ENCODE measurements at regions of chr17 and their contacts with region 1.

Region 1: GRCh38 chr17:82153745-82154375 is 55.8 kb upstream of the FASN start:
- DNase-seq: peak; percentile 73 to 85 (median 78)
- H3K4me3 ChIP-seq: no peak overlapping the region
- H3K27ac ChIP-seq: peak overlapping the region in 2 of 59 donors; percentile 14 to 74
- H3K27me3 ChIP-seq: no peaks in the 10 kb centered on the region
- CTCF ChIP-seq: peak; percentile 51 to 99 (median 94)

Region 2: DNA sequence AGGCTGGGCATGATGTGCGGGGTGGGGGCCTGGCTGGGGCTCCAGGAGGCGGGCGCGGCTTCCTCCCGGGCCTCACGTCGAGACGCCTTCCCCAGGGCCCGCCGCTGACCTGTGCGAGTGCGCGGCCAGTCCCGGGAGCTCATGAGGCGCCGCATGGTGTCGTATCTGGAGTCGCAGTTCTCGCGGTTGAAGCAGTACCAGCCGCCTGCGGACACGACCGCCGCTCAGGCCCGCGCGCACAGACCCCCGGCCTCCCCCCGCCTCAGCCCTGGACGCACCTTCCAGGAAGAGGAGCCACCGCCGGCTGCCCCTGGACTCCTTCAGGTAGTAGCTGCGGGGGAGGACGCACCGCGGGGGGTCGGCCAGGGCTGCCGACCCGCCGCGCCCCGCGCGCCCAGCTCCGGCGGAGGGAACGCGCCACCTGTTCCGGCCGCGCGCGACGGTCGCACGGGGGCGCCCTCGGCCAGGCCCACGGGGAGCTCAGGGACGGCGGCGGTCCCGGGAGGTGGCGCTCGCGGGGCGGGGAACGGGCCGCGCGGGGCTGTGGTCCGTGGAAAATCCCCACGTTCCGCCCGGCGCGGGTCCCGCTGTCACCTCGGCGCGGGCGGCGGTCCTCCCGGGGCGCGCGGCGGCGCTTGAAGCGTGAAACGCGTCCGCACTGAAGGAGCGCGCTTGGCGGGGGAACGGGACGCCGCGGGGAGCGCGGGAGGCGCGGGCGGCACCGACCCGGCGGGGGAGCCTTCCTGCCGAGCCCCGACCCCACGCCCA is 194.3 kb before region 1 on chr17:
- intact Hi-C with region 1: loop called (anchors 5 kb)
- DNase-seq: peak in 7 of 10 donors; percentile 44 to 83 (median 54)
- H3K4me3 ChIP-seq: peak overlapping the region; percentile 18 to 64 (median 47)
- H3K27ac ChIP-seq: no peak overlapping the region
- H3K27me3 ChIP-seq: peaks cover 0 to 41% (median 25%) of the 10 kb centered on the region in 45 donors
- CTCF ChIP-seq: peak in 55 of 56 donors; percentile 29 to 99 (median 75)

Region 3: GRCh38 chr17:82030470-82031302 is 123.2 kb before region 1 on chr17:
- intact Hi-C with region 1: loop called (anchors 1 to 2 kb)
- DNase-seq: peak; percentile 65 to 92 (median 84)
- H3K4me3 ChIP-seq: peak overlapping the region; percentile 40 to 70 (median 56)
- H3K27ac ChIP-seq: peak overlapping the region in 42 of 59 donors; percentile 5 to 87 (median 55)
- H3K27me3 ChIP-seq: no peaks in the 10 kb centered on the region
- CTCF ChIP-seq: peak; percentile 83 to 99 (median 96)

Region 4: DNA sequence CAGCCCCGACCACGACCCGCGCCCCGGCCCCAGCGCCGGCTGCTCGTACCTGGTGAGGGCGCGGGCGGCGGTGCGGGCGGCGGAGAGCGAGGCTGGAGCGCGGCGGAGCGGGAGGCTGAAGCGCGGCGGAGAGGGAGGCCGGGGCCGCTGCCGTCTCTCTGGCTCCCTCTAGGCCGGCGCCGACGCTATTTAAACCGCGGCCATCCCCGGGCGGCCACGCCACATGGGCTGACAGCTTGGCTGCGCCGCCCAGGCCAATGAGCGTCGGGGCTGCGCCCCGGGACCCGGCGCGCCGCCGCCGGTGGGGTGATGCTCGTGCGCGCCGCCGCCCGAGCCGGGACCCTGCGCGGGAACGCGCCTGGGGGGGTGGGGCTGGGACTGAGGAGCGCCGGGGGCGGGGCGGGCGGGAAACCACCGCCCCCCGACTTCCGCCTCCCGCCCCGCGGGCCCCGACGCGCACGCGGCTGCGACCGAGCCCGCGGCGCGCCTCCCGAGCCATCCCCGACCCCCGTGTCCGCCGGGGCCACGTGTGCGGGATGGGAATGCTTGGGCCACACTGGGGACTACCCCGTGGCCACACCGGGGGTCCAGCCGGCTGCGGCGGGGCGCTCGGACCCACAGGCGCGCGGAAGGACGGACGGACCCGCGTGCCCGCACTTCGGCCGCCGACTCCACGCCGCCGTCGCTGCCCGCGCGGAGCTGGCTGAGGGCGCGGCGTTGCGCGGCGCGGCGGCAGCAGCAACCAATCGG is 55.6 kb before region 1 on chr17 and contains the start of gene FASN:
- intact Hi-C with region 1: loop called (anchors 5 to 10 kb)
- DNase-seq: peak; percentile 81 to 94 (median 91)
- H3K4me3 ChIP-seq: peak within 1 kb of the TSS; percentile 64 to 98 (median 86)
- H3K27ac ChIP-seq: peak within 1 kb of the TSS; percentile 61 to 98 (median 95)
- H3K27me3 ChIP-seq: no peaks in the 10 kb centered on the region
- CTCF ChIP-seq: peak in 49 of 56 donors; percentile 6 to 65 (median 42)
- total RNA-seq, gene FASN: 137 to 275 (median 201) TPM

Region 5: DNA sequence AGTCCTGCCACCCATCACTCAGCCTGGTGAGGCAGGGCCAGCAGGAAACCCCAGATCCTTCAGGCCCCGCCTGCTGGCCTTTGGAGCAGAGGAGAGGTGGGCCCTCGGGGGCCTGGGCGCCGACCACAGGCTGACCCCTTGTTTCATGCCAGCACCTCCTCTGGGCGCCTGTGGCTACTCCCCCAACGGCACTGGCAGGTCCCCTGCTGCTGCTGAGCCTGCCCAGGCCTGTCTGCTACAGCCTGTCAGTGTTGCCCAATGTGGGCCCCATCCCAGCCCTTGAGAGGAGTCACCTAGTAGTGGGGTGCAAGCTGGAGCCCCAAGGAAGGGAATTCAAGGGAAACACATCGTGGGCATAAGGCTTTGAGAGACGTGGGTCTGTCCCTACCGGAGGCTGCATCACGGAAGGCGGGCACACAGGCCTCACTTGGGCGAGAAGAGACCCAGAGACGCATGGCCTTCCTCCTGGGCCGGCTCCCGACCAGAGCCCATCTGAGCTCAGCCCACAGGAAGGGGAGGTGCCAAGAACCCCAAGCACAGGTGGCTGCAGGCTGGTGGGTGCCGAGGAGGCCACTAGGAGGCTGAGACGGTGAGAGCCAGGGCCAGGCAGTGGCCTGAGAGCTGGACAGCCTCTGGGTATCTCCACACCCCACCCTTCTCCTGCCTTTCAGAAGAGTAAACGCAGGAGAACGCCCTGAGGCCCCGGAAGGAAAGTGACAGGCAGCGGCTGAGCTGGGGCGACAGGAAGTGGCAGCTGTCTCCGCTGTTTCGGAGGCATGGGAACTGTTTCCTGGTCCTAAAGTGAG is 47.8 kb before region 1 on chr17:
- intact Hi-C with region 1: loop called in 1 of 2 experiments (anchors 10 kb)
- DNase-seq: peak in 2 of 10 donors; percentile 29 to 41
- H3K4me3 ChIP-seq: peak overlapping the region in 12 of 59 donors; percentile 3 to 37 (median 16)
- H3K27ac ChIP-seq: peak overlapping the region in 52 of 59 donors; percentile 0 to 83 (median 56)
- H3K27me3 ChIP-seq: no peaks in the 10 kb centered on the region
- CTCF ChIP-seq: peak in 1 of 56 donors; percentile 13

Region 6: GRCh38 chr17:82120148-82120547 is 33.7 kb before region 1 on chr17:
- intact Hi-C with region 1: no loop called
- DNase-seq: no peak
- H3K4me3 ChIP-seq: no peak overlapping the region
- H3K27ac ChIP-seq: peak overlapping the region in 11 of 59 donors; percentile 29 to 71 (median 55)
- H3K27me3 ChIP-seq: no peaks in the 10 kb centered on the region
- CTCF ChIP-seq: no peak

Region 7: DNA sequence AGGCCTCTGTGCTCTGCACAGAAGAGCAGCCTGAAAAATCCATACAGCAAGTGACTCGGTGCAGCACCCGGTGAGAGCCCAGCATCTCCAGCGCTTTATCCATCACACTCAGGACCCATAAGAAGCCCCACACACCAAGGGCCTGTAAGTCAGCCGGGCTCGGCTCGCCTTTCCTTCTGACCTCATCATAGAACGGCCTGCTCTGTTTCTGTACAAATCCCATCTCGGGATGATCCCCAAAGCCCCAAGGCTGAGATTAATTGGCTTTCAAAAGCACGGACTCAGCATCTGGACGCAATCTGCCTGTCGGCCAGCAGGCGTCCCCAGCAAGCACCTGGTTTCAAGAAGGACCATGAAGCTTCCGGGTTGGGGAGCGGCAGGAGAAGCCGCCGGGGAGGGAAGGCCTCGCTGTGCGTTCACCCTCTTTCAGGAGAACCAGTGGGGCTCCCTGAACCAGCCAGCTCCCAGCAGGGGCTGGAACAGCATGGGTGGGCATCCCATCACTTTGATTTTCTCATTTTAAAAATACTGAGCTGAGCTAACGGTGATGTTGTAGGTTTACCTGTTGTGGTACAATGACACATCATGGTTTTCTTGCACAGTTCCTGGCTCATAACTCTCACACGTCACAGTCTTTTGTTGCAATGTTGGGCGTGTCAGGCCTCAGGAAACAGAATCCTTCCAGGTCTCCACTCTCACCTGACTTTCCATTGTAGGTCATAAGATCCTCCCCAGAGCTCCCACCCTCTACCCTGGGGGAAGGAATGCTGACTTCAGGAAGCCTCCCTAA is 52.1 kb after region 1 on chr17:
- intact Hi-C with region 1: no loop called
- DNase-seq: peak; percentile 64 to 88 (median 80)
- H3K4me3 ChIP-seq: peak overlapping the region in 45 of 59 donors; percentile 5 to 55 (median 29)
- H3K27ac ChIP-seq: peak overlapping the region in 53 of 59 donors; percentile 23 to 89 (median 70)
- H3K27me3 ChIP-seq: no peaks in the 10 kb centered on the region
- CTCF ChIP-seq: peak; percentile 70 to 91 (median 83)